ENCODE measurements at regions of chr18 and their contacts with region 1.

Region 1: GRCh38 chr18:76349067-76349715 is 145.9 kb downstream of the ZNF516 start:
- DNase-seq: peak; percentile 67
- ATAC-seq: peak; percentile 40
- H3K4me3 ChIP-seq: no peak overlapping the region
- H3K27ac ChIP-seq: no peak overlapping the region
- H3K4me1 ChIP-seq: peaks cover under 1% of the 10 kb centered on the region; the same call in 1 of the 2 replicates
- H3K27me3 ChIP-seq: no peaks in the 10 kb centered on the region
- CTCF ChIP-seq: peak; percentile 88
- POLR2A ChIP-seq: no peak
- RAD21 ChIP-seq: peak; percentile 89

Region 2: GRCh38 chr18:74353169-74353775 is 1995.9 kb before region 1 on chr18:
- CTCF ChIA-PET with region 1: no interaction called
- POLR2A ChIA-PET with region 1: no interaction called
- dilution Hi-C with region 1: no loop called
- in situ Hi-C with region 1: no loop called
- intact Hi-C with region 1: loop called (anchors 2 kb)
- DNase-seq: peak; percentile 74
- ATAC-seq: peak; percentile 97
- H3K4me3 ChIP-seq: no peak overlapping the region
- H3K27ac ChIP-seq: no peak overlapping the region
- H3K4me1 ChIP-seq: peaks cover 2% of the 10 kb centered on the region
- H3K27me3 ChIP-seq: peaks cover 9% of the 10 kb centered on the region
- CTCF ChIP-seq: peak; percentile 69
- POLR2A ChIP-seq: no peak
- RAD21 ChIP-seq: peak; percentile 72

Region 3: DNA sequence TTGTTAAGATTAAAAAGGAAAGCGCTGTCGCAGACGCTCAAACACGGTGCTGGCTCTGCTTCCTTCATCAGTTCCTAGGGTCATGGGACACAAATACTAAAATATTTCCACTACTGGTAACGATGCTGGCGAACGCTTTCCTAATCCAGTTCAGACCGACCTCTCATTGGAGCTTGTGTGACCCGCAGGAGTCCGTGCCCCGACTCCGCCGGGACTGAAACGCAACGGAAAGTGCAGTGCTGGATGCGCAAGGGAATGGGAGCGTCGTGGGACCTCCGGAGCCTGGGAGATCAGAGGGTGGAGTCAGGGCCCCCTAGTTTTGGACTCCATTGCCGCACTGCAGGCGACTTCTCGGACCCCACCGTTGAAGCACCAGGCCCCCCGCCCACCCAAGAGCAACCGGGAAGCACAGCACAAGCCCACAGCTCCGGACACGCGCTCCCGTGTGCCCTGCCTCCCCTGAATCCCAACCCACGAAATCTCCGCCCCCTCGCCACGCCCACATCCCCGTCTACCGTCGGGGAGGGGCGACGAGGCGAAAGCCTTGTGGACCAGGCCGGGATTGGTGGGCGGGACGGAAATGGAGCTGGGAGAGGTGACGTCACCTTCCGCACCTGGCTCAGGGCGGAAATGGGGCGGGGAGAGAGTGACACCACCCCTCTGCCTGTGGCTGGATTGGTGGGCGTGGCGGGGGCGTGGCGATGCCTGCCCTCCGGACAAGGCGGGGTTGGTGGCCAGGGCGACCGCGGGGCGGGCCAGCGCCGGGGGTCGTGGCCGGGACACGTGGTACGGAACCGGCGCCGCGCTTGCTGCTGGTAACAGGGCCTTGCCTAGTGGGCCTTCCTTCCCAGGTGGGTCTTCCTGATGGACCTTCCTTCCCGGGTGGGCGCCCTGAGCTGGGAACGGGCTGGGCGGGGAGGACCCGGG is 1853.3 kb before region 1 on chr18 and contains the start of gene CNDP2:
- CTCF ChIA-PET with region 1: no interaction called
- POLR2A ChIA-PET with region 1: no interaction called
- dilution Hi-C with region 1: no loop called
- in situ Hi-C with region 1: no loop called
- intact Hi-C with region 1: loop called (anchors 5 kb)
- DNase-seq: peak; percentile 98
- ATAC-seq: peak; percentile 94
- H3K4me3 ChIP-seq: peak within 1 kb of the TSS; percentile 79
- H3K27ac ChIP-seq: peak within 1 kb of the TSS; percentile 61
- H3K4me1 ChIP-seq: peaks cover 5% of the 10 kb centered on the region; the same call in 1 of the 2 replicates
- H3K27me3 ChIP-seq: peaks cover 2% of the 10 kb centered on the region; the same call in 1 of the 2 replicates
- CTCF ChIP-seq: no peak
- POLR2A ChIP-seq: peak; percentile 64; the same call in 1 of the 2 replicates
- RAD21 ChIP-seq: no peak
- total RNA-seq, gene CNDP2: 52.0 and 52.2 TPM in 2 replicates

Region 4: GRCh38 chr18:74645679-74646078 is 1703.5 kb before region 1 on chr18:
- CTCF ChIA-PET with region 1: no interaction called
- POLR2A ChIA-PET with region 1: no interaction called
- dilution Hi-C with region 1: no loop called
- in situ Hi-C with region 1: loop called (anchors 10 kb)
- intact Hi-C with region 1: no loop called
- DNase-seq: peak; percentile 56
- ATAC-seq: peak; percentile 84
- H3K4me3 ChIP-seq: no peak overlapping the region
- H3K27ac ChIP-seq: peak overlapping the region; percentile 47; the same call in 1 of the 2 replicates
- H3K4me1 ChIP-seq: peaks cover 5% of the 10 kb centered on the region; the same call in 1 of the 2 replicates
- H3K27me3 ChIP-seq: no peaks in the 10 kb centered on the region
- CTCF ChIP-seq: no peak
- POLR2A ChIP-seq: no peak
- RAD21 ChIP-seq: no peak

Region 5: GRCh38 chr18:75105551-75106254 is 1243.5 kb before region 1 on chr18:
- CTCF ChIA-PET with region 1: no interaction called
- POLR2A ChIA-PET with region 1: no interaction called
- dilution Hi-C with region 1: no loop called
- in situ Hi-C with region 1: no loop called
- intact Hi-C with region 1: loop called (anchors 10 kb)
- DNase-seq: no peak
- ATAC-seq: no peak
- H3K4me3 ChIP-seq: no peak overlapping the region
- H3K27ac ChIP-seq: no peak overlapping the region
- H3K4me1 ChIP-seq: no peaks in the 10 kb centered on the region
- H3K27me3 ChIP-seq: peaks cover 7% of the 10 kb centered on the region; the same call in 1 of the 2 replicates
- CTCF ChIP-seq: no peak
- POLR2A ChIP-seq: no peak
- RAD21 ChIP-seq: no peak

Region 6: DNA sequence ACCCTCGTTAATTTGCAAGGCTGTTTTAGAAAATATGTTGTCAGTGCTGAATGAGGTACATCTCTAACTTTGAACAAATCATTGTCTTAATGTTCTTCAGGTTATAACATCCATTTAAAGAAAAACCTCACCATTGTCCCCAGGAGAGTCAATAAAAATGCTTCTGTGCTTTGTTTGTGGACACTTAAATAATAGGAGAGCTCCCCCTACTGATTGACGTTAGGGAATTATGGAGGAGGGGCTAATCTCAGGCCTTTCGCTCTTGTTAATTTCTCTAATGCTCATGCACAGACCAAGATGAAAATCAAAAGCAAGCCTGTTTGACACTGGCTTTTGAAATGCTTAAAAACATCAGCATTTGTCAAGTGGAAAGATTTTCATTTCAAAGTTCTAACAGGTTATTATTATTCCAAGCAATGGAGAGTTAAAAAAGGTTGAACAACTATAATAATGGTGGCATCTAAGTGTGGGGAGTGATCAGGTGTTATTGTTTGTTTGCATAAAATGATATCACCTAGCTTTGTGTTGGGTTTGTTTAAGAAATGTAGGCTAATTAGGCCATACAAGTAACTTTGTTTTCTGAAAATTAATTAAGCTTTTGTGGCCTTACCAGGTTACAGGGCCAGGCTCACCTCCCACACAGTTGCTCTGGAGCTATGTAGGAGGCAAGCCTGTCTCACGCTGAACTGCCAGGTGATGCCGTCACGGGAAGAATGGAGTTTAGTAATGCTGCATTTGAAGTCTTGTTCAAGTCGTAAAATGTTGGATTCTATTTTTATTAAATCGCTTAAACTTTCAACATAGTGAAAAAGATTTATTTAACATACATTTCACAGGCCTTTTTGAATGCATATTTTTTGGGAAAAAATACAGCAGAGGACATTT is 870.0 kb before region 1 on chr18:
- CTCF ChIA-PET with region 1: no interaction called
- POLR2A ChIA-PET with region 1: no interaction called
- dilution Hi-C with region 1: no loop called
- in situ Hi-C with region 1: loop called (anchors 25 kb)
- intact Hi-C with region 1: loop called (anchors 10 kb)
- DNase-seq: peak; percentile 59
- ATAC-seq: peak; percentile 49
- H3K4me3 ChIP-seq: no peak overlapping the region
- H3K27ac ChIP-seq: no peak overlapping the region
- H3K4me1 ChIP-seq: peaks cover 11% of the 10 kb centered on the region
- H3K27me3 ChIP-seq: no peaks in the 10 kb centered on the region
- CTCF ChIP-seq: peak; percentile 70
- POLR2A ChIP-seq: no peak
- RAD21 ChIP-seq: peak; percentile 72

Region 7: DNA sequence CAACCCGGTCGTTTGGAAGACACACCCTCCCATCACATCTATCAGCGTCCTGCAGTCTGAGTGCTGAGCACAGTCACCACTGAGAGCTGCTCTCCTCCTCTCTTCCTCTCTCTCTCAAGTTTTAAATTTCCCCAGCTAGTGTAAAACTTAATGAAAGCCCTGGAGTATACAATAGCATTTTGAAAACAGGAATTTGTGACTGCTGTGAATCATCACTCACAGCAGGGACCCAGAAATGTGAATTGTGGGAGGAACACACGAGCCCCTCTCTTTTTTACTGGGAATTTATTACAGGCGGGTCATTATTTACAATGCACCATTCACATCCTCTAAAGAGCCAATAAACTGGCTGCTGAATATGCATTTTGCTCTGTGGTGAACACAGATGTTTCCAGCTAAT is 736.7 kb before region 1 on chr18:
- CTCF ChIA-PET with region 1: no interaction called
- POLR2A ChIA-PET with region 1: no interaction called
- dilution Hi-C with region 1: no loop called
- in situ Hi-C with region 1: no loop called
- intact Hi-C with region 1: no loop called
- DNase-seq: no peak
- ATAC-seq: no peak
- H3K4me3 ChIP-seq: no peak overlapping the region
- H3K27ac ChIP-seq: no peak overlapping the region
- H3K4me1 ChIP-seq: no peaks in the 10 kb centered on the region
- H3K27me3 ChIP-seq: no peaks in the 10 kb centered on the region
- CTCF ChIP-seq: no peak
- POLR2A ChIP-seq: no peak
- RAD21 ChIP-seq: no peak

Region 8: DNA sequence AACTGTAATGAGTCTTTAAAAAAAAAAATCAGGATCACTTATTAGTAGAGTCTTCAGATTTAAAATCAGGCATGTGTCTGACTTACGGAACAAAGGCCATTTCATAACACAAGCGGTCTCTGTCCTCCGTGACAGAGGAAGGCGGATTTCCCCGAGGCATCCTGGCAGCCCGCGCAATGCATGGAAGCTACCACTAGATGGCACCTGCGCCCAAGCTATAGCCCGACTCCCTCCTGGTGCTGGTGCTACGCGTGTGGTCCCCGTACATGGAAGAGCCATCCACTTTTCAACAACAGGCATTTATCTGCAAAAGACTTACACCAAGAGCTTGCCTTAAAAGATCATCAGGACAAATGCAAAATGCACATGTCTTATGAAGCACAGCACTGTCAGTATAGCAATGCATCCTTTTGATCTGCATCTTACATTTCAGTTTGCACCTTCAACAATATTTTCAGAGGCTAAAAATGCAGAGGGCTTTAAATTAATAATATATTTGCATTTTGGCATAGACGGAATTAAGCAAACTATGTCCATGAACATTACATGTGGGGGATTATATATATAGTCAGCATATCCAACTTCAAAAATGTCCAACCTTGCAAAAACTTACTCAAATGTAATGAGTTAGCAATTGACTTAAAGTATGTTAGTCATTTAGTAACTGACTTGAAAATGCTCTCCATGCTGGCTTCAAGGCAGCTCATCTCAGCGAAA is 49.9 kb after region 1 on chr18:
- CTCF ChIA-PET with region 1: no interaction called
- POLR2A ChIA-PET with region 1: no interaction called
- dilution Hi-C with region 1: no loop called
- in situ Hi-C with region 1: no loop called
- intact Hi-C with region 1: no loop called
- DNase-seq: peak; percentile 77
- ATAC-seq: peak; percentile 87
- H3K4me3 ChIP-seq: no peak overlapping the region
- H3K27ac ChIP-seq: no peak overlapping the region
- H3K4me1 ChIP-seq: peaks cover 6% of the 10 kb centered on the region
- H3K27me3 ChIP-seq: no peaks in the 10 kb centered on the region
- CTCF ChIP-seq: peak; percentile 96
- POLR2A ChIP-seq: 0 out of 2 replicates have a peak, but pooled peaks have one; percentile 32
- RAD21 ChIP-seq: peak; percentile 99

Region 9: DNA sequence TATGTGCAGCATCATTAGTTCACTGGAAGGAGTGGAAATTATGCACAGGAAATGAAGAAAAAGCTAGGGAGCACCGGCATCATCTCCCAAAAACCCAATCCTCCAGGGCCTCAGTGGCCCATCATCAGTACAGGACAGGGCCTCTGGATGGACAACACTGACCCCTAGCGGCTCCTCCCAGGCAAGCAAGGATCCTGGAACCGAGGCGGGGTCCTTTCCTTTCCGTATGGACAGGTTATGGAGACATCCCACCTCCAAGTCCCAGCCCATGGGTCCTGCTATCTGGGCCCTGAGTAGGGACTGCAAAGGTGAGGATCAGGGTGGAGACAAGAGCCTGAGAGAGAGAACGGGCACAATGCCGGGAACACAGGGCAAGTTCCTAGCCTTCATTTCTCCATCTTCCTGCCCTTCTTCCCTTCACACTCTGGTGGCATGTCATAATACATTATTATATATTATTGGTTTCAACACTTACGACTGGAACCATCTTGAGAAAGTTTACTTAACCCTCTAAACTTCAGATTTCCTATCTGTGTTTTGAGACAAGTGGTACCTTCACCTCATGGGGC is 77.6 kb after region 1 on chr18:
- CTCF ChIA-PET with region 1: no interaction called
- POLR2A ChIA-PET with region 1: no interaction called
- dilution Hi-C with region 1: no loop called
- in situ Hi-C with region 1: no loop called
- intact Hi-C with region 1: no loop called
- DNase-seq: no peak
- ATAC-seq: peak; percentile 43; the same call in 1 of the 2 replicates
- H3K4me3 ChIP-seq: no peak overlapping the region
- H3K27ac ChIP-seq: no peak overlapping the region
- H3K4me1 ChIP-seq: peaks cover 12% of the 10 kb centered on the region
- H3K27me3 ChIP-seq: no peaks in the 10 kb centered on the region
- CTCF ChIP-seq: peak; percentile 48
- POLR2A ChIP-seq: no peak
- RAD21 ChIP-seq: peak; percentile 56

Region 10: DNA sequence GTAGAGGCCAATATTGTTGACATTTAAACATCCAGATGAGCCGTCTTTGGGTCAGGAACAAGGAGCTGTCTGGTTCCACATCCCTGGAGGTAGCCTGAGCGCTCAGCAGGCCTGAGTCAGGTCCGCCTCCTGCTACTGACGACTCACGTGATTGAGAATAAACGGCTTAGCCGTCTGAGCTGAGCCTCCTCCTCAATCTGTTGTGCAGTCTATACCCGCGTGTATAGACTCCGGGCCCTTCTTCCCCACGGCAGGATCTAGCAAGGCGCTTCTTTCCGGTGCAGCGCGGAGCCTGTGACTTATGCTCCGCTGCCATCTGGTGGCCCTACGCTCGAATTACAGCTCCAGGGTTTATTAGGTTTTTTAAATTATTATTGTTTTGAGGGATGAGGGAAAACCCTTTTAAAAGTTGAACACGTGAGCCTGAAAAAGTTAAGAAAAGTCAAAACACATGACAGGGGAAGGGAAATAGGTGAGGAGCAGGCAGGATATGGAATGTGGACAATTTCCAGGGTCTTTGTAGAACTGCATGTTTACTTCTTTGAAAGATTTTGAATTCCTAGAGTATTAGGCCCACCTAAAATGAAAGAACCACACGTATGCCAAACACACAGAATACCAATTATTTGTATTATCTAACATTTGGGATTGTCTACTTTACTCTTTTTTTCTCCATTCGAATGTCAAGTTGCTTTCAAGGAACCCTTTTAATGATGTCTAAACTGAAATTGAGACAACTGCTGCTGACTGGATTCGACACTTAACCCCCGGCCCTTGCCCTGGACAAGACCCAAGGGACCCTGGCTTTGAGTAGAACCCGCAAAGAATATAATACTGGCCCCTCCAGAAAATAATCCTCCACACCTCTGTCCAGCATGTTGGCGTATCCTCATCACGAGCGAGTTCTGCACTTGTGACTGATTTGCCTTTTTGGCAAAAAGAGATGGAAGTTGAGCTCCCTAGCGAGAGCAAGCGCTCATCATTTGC is 360.8 kb after region 1 on chr18:
- CTCF ChIA-PET with region 1: interaction called, 3 read pairs
- POLR2A ChIA-PET with region 1: no interaction called
- dilution Hi-C with region 1: no loop called
- in situ Hi-C with region 1: no loop called
- intact Hi-C with region 1: loop called (anchors 1 kb)
- DNase-seq: peak; percentile 65
- ATAC-seq: peak; percentile 99
- H3K4me3 ChIP-seq: no peak overlapping the region
- H3K27ac ChIP-seq: no peak overlapping the region
- H3K4me1 ChIP-seq: no peaks in the 10 kb centered on the region
- H3K27me3 ChIP-seq: no peaks in the 10 kb centered on the region; the same call in 1 of the 2 replicates
- CTCF ChIP-seq: peak; percentile 97
- POLR2A ChIP-seq: peak; percentile 43; the same call in 1 of the 2 replicates
- RAD21 ChIP-seq: peak; percentile 98